Naive thymus-derived CD4-positive, alpha-beta T cell (primary cell): ENCODE measurements at regions of chr4 and their contacts with region 1.

Region 1: GRCh38 chr4:109815151-109816081 is at the start of gene GAR1:
- DNase-seq: peak; percentile 55 to 89 (median 86)
- ATAC-seq: peak; percentile 95
- H3K4me3 ChIP-seq: peak within 1 kb of the TSS; percentile 88
- H3K4me3 Mint-ChIP-seq: peak within 1 kb of the TSS; percentile 93 to 99 (median 98)
- H3K27ac ChIP-seq: peak within 1 kb of the TSS; percentile 95
- H3K27ac Mint-ChIP-seq: peak within 1 kb of the TSS; percentile 96 to 99 (median 98)
- H3K4me1 ChIP-seq: peaks cover 15% of the 10 kb centered on the region in 2 donors
- H3K4me1 Mint-ChIP-seq: peaks cover 28 to 54% (median 49%) of the 10 kb centered on the region in 7 donors
- H3K27me3 ChIP-seq: no peaks in the 10 kb centered on the region
- H3K27me3 Mint-ChIP-seq: no peaks in the 10 kb centered on the region
- total RNA-seq, gene GAR1: 9.5 to 24.8 (median 10.3) TPM

Region 2: GRCh38 chr4:108620101-108620932 is 1195.1 kb before region 1 on chr4 and contains the start of gene RPL34:
- CTCF ChIA-PET with region 1: no interaction called
- POLR2A ChIA-PET with region 1: no interaction called
- intact Hi-C with region 1: loop called (anchors 1 to 2 kb)
- DNase-seq: peak; percentile 85 to 99 (median 96)
- ATAC-seq: peak; percentile 100
- H3K4me3 ChIP-seq: peak within 1 kb of the TSS; percentile 98
- H3K4me3 Mint-ChIP-seq: peak within 1 kb of the TSS; percentile 87 to 99 (median 96)
- H3K27ac ChIP-seq: peak within 1 kb of the TSS; percentile 90
- H3K27ac Mint-ChIP-seq: peak within 1 kb of the TSS; percentile 95 to 99 (median 97)
- H3K4me1 ChIP-seq: peaks cover 29 to 30% of the 10 kb centered on the region in 2 donors
- H3K4me1 Mint-ChIP-seq: peaks cover 33 to 81% (median 66%) of the 10 kb centered on the region in 7 donors
- H3K27me3 ChIP-seq: no peaks in the 10 kb centered on the region
- H3K27me3 Mint-ChIP-seq: peaks cover 0 to 3% (median 0%) of the 10 kb centered on the region in 5 donors
- total RNA-seq, gene RPL34: 1,411 to 3,442 (median 3,215) TPM

Region 3: GRCh38 chr4:109433205-109434006 is 382.0 kb before region 1 on chr4 and contains the start of gene SEC24B:
- CTCF ChIA-PET with region 1: interaction called, 4 read pairs
- POLR2A ChIA-PET with region 1: interaction called, 3 read pairs
- intact Hi-C with region 1: loop called (anchors 1 kb)
- DNase-seq: peak; percentile 84 to 91 (median 90)
- ATAC-seq: peak; percentile 95
- H3K4me3 ChIP-seq: peak within 1 kb of the TSS; percentile 74
- H3K4me3 Mint-ChIP-seq: peak within 1 kb of the TSS; percentile 83 to 94 (median 88)
- H3K27ac ChIP-seq: peak within 1 kb of the TSS; percentile 93
- H3K27ac Mint-ChIP-seq: peak within 1 kb of the TSS; percentile 75 to 95 (median 93)
- H3K4me1 ChIP-seq: peaks cover 11 to 19% of the 10 kb centered on the region in 2 donors
- H3K4me1 Mint-ChIP-seq: peaks cover 29 to 61% (median 54%) of the 10 kb centered on the region in 7 donors
- H3K27me3 ChIP-seq: no peaks in the 10 kb centered on the region
- H3K27me3 Mint-ChIP-seq: no peaks in the 10 kb centered on the region
- total RNA-seq, gene SEC24B: 29.2 to 41.8 (median 35.2) TPM

Region 4: DNA sequence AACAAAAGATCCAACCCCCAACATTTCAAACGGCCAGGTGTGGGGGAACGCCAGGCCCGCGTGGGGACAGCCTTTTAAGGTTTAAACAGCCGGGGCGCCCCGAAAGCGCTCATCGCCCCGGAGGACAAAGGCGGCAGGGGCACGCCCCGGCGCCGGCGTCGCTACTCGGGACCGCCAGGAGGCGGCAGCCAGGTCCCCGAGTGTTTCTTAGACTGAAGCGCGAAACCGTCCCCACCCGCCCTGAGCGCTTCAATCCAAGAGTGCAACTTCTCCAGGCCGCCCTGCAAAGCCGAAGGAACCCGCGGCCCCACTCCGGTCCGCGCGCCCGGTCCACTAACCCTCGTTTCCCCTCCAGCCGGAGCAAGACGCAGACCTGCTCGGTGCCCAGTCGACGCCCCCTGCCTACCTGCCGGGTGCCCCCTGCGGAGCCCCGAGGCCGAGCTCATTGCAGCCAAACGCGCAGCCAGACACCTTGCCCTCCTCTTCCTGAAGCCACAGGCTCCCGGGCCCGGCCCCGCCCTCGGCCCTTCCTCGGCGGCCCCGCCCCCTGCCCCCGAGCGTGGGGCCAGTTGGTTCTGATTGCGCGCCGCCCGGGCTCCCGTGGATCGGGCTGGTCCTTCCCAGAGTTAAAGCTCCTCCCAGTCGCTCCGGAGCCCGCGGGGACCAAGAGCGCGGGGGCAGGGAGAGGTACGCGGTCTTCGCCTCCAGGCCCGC is 112.3 kb before region 1 on chr4 and contains the start of gene CASP6:
- CTCF ChIA-PET with region 1: no interaction called
- POLR2A ChIA-PET with region 1: interaction called, 6 read pairs
- intact Hi-C with region 1: loop called (anchors 1 kb)
- DNase-seq: peak; percentile 64 to 78 (median 75)
- ATAC-seq: peak; percentile 92
- H3K4me3 ChIP-seq: peak within 1 kb of the TSS; percentile 78
- H3K4me3 Mint-ChIP-seq: peak within 1 kb of the TSS; percentile 86 to 96 (median 94)
- H3K27ac ChIP-seq: peak within 1 kb of the TSS; percentile 83
- H3K27ac Mint-ChIP-seq: peak within 1 kb of the TSS; percentile 85 to 95 (median 94)
- H3K4me1 ChIP-seq: peaks cover 8 to 16% of the 10 kb centered on the region in 2 donors
- H3K4me1 Mint-ChIP-seq: peaks cover 20 to 50% (median 48%) of the 10 kb centered on the region in 7 donors
- H3K27me3 ChIP-seq: no peaks in the 10 kb centered on the region
- H3K27me3 Mint-ChIP-seq: no peaks in the 10 kb centered on the region
- total RNA-seq, gene CASP6: 9.3 to 29.9 (median 23.6) TPM

Region 5: GRCh38 chr4:109826719-109827118 is 11.3 kb after region 1 on chr4:
- CTCF ChIA-PET with region 1: interaction called, 4 read pairs
- POLR2A ChIA-PET with region 1: no interaction called
- intact Hi-C with region 1: loop called (anchors 1 kb)
- DNase-seq: peak in 6 of 9 donors; percentile 14 to 46 (median 27)
- ATAC-seq: peak; percentile 73
- H3K4me3 ChIP-seq: no peak overlapping the region
- H3K4me3 Mint-ChIP-seq: no peak overlapping the region
- H3K27ac ChIP-seq: no peak overlapping the region
- H3K27ac Mint-ChIP-seq: no peak overlapping the region
- H3K4me1 ChIP-seq: no peaks in the 10 kb centered on the region
- H3K4me1 Mint-ChIP-seq: peaks cover 0 to 3% (median 0%) of the 10 kb centered on the region in 7 donors
- H3K27me3 ChIP-seq: no peaks in the 10 kb centered on the region
- H3K27me3 Mint-ChIP-seq: no peaks in the 10 kb centered on the region

Region 6: GRCh38 chr4:110516106-110516922 is 700.9 kb after region 1 on chr4:
- CTCF ChIA-PET with region 1: no interaction called
- POLR2A ChIA-PET with region 1: no interaction called
- intact Hi-C with region 1: loop called in 1 of 2 experiments (anchors 10 kb)
- DNase-seq: peak; percentile 29 to 67 (median 61)
- ATAC-seq: peak; percentile 91
- H3K4me3 ChIP-seq: peak overlapping the region; percentile 66
- H3K4me3 Mint-ChIP-seq: peak overlapping the region; percentile 84 to 99 (median 91)
- H3K27ac ChIP-seq: peak overlapping the region; percentile 58
- H3K27ac Mint-ChIP-seq: peak overlapping the region in 8 of 9 donors; percentile 7 to 79 (median 29)
- H3K4me1 ChIP-seq: peaks cover 0 to 5% of the 10 kb centered on the region in 2 donors
- H3K4me1 Mint-ChIP-seq: peaks cover 7 to 16% (median 11%) of the 10 kb centered on the region in 7 donors
- H3K27me3 ChIP-seq: no peaks in the 10 kb centered on the region
- H3K27me3 Mint-ChIP-seq: peaks cover 1 to 13% (median 5%) of the 10 kb centered on the region in 5 donors